Gastrocnemius medialis (tissue), 4 donors: ENCODE measurements at regions of chr19 and their contacts with region 1.

Region 1: GRCh38 chr19:17947815-17948513 is 15.1 kb downstream of the CCDC124 start:
- DNase-seq: peak; percentile 70 to 83
- ATAC-seq: peak; percentile 69 to 82
- H3K4me3 ChIP-seq: peak overlapping the region; percentile 62 to 85 (median 70)
- H3K27ac ChIP-seq: peak overlapping the region; percentile 51 to 63 (median 56)
- H3K4me1 ChIP-seq: peaks cover 19 to 39% of the 10 kb centered on the region in 2 donors
- H3K27me3 ChIP-seq: peaks cover 42 to 44% (median 42%) of the 10 kb centered on the region in 3 donors
- CTCF ChIP-seq: no peak
- POLR2A ChIP-seq: no peak

Region 2: DNA sequence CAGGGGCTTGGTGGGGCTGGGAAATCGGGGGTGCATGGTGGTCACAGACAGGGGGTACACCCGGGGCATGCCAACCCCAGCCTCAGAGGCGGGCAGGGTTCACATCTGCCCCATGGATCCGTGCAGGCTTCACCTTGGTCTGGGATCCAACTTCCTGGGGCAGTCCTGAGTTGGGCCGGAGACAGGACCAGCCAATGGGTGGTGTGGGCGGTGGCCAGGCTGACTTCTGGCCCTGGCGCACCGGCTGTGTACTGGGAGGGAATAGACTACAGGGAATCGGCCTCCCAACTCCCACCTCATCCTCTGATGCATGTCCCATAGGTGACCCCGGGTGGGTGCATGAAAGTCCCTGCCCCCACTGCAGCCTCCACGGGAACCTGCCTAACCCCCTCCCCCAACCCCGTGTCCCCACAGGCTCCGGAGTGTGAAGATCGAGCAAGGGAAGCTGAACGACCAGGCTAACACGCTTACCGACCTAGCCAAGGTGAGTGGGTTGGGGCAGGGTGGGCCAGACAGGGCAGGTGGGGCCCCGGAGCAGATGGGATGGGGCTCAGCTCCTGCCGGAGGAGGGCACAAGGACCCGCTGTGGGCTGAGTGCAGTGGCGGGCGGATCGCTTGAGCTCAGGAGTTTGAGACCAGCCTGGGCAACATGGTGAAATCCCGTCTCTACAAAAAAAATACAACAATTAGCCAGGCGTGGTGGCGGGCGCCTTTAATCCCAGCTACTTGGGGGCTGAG is 45.3 kb after region 1 on chr19:
- in situ Hi-C with region 1: loop called in 2 of 4 experiments (anchors 5 to 10 kb)
- intact Hi-C with region 1: loop called (anchors 2 kb)
- DNase-seq: no peak
- ATAC-seq: no peak
- H3K4me3 ChIP-seq: no peak overlapping the region
- H3K27ac ChIP-seq: no peak overlapping the region
- H3K4me1 ChIP-seq: no peaks in the 10 kb centered on the region
- H3K27me3 ChIP-seq: no peaks in the 10 kb centered on the region
- CTCF ChIP-seq: no peak
- POLR2A ChIP-seq: no peak

Region 3: GRCh38 chr19:18000935-18001778 is 53.2 kb after region 1 on chr19:
- in situ Hi-C with region 1: loop called in 1 of 4 experiments (anchors 10 kb)
- intact Hi-C with region 1: loop called (anchors 2 kb)
- DNase-seq: peak; percentile 73 to 78
- ATAC-seq: peak; percentile 61 to 68
- H3K4me3 ChIP-seq: peak overlapping the region; percentile 58 to 64 (median 60)
- H3K27ac ChIP-seq: peak overlapping the region; percentile 82 to 83 (median 82)
- H3K4me1 ChIP-seq: peaks cover 0 to 5% of the 10 kb centered on the region in 2 donors
- H3K27me3 ChIP-seq: peaks cover 0 to 12% (median 6%) of the 10 kb centered on the region in 3 donors
- CTCF ChIP-seq: peak in 1 of 5 experiments; percentile 14
- POLR2A ChIP-seq: peak; percentile 68 to 81